Naive thymus-derived CD8-positive, alpha-beta T cell (primary cell): ENCODE measurements at regions of chr9 and their contacts with region 1.

Region 1: DNA sequence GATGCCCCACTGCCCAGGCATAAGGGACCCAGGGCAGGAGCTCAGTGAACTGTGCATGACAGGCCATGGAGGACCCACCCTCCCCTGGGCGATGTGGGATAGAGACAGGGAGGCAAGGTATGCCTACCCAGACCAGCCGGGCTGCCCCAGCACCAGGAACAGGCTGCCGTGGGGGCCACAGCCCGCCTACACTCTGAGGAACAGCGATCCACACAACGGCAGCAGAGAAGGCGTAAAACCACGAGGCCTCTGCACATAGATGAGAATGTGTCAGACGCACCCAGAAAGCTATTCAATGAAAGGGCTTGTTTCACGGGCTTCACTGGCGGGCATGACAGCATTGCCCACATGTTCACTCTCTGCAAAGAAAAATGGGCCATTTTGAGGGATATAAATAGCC is 49.5 kb downstream of the SEMA4D start:
- DNase-seq: peak in 3 of 10 donors; percentile 26 to 46 (median 45)
- ATAC-seq: peak; percentile 27 to 29
- H3K4me3 Mint-ChIP-seq: peak overlapping the region; percentile 48 to 84 (median 78)
- H3K27ac Mint-ChIP-seq: peak overlapping the region; percentile 91 to 97 (median 96)
- H3K4me1 Mint-ChIP-seq: peaks cover 59 to 95% (median 94%) of the 10 kb centered on the region in 4 donors
- H3K27me3 Mint-ChIP-seq: no peaks in the 10 kb centered on the region

Region 2: GRCh38 chr9:89342948-89343347 is 105.4 kb before region 1 on chr9:
- POLR2A ChIA-PET with region 1: no interaction called
- DNase-seq: no peak
- ATAC-seq: no peak
- H3K4me3 Mint-ChIP-seq: no peak overlapping the region
- H3K27ac Mint-ChIP-seq: peak overlapping the region in 1 of 10 donors; percentile 35
- H3K4me1 Mint-ChIP-seq: peaks cover 2 to 23% (median 12%) of the 10 kb centered on the region in 4 donors
- H3K27me3 Mint-ChIP-seq: no peaks in the 10 kb centered on the region

Region 3: DNA sequence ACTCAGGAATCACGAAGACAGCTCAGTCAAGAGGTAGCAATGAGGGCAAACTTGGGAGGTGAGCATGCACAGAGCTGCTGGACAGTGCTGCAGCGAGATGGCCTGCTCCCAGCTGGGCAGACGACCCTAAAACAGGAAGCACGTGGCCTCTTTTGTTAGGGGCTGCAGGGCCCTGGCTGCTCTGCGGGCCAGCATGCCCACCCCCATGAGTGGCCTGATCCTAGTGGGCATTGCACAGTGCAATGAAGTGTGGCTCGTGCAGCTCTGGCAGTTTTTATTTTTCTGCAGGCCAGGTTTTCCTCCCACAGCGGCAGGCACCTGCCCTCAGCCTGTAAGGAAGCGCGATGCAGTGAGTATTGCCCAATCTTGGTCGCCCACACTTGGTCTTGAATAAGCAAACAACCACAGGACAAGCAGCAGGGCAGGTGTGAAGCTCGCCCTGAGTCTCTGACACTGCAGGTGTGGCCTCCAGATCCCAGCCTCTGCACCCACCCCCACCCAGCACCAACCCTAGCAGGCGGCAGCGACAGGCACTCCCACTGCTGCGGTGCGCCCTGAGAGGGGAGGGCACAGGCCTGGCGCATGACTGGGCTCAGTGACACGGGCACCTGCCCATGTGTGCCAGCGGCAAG is 11.3 kb before region 1 on chr9:
- POLR2A ChIA-PET with region 1: interaction called, 108 read pairs
- DNase-seq: peak in 9 of 10 donors; percentile 29 to 78 (median 55)
- ATAC-seq: peak; percentile 85 to 94
- H3K4me3 Mint-ChIP-seq: peak overlapping the region; percentile 55 to 84 (median 72)
- H3K27ac Mint-ChIP-seq: peak overlapping the region; percentile 87 to 97 (median 92)
- H3K4me1 Mint-ChIP-seq: peaks cover 46 to 99% (median 94%) of the 10 kb centered on the region in 4 donors
- H3K27me3 Mint-ChIP-seq: no peaks in the 10 kb centered on the region

Region 4: DNA sequence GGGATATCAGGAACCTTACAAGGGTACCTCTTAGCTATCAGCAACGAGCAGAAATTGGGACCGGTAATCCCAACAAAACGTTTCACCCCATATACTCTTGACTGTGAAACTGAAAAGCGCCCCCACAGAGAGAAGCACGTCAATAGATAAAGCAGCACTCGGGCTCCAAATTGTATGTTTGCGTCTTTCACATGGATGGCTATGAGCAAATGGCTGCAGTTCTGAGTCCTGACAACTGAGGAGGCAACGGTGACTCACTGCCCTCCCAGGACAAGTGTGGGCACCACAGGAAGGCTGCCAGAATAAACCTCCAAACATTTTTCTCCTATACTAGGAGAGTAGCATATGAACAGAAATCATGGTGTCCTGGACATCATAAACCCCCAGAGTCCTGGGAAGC is 12.9 kb after region 1 on chr9:
- POLR2A ChIA-PET with region 1: interaction called, 108 read pairs
- DNase-seq: no peak
- ATAC-seq: peak in 1 of 2 donors; percentile 5
- H3K4me3 Mint-ChIP-seq: peak overlapping the region in 9 of 10 donors; percentile 44 to 90 (median 65)
- H3K27ac Mint-ChIP-seq: peak overlapping the region; percentile 95 to 99 (median 97)
- H3K4me1 Mint-ChIP-seq: peaks cover 72 to 99% (median 97%) of the 10 kb centered on the region in 4 donors
- H3K27me3 Mint-ChIP-seq: no peaks in the 10 kb centered on the region